ENCODE measurements at regions of chr3 and their contacts with region 1.

Region 1: DNA sequence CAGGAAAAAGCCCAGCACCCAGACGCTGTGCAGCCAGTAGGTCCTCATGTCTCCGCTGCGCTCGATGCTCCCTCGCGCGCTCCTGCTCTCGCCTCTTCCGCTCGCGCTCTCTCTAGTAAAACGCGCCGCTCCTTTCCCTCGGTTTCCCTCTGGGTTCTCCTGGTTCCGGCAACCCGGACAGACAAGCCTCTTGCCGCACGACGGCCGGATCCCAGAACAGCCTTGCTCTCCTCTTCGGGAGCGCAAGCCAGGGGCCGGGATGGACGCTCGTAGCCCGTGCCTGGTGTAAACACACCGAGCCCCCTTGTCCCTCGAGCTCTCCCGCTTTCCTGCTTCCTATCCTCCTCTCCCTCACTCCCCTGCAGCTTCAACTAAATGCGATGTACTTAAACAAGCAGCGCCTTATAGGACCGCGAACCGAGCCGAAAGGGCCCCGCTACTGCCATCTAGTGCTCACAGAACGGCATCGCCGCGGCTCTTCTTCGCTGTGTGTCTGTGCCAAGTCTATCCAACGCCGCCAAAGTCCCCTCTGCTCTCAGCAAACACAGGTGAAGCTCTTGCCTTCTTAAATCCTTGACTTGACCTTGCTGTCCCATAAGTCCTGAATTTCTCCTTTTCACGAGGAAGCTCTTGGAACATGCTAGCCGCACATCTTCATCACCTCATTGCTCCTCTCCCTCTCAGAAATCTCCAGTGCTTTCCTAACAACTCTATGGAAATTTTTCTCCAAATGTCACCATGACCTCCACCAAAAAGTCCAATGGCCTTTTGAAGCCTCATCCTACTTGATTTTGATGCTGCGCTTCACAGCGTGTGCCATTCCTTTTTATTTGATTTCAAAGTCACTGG is 1037.2 kb downstream of the IGSF11 start:
- DNase-seq: peak; percentile 31 to 83
- ATAC-seq: peak; percentile 90 to 98
- H3K4me3 ChIP-seq: peak overlapping the region; percentile 56
- H3K27ac ChIP-seq: peak overlapping the region; percentile 54 to 80
- H3K4me1 ChIP-seq: peaks cover 8% of the 10 kb centered on the region; the same call in 2 of the 3 replicates
- CTCF ChIP-seq: peak; percentile 81
- EP300 ChIP-seq: no peak
- POLR2A ChIP-seq: no peak
- RAD21 ChIP-seq: peak; percentile 85 to 91

Region 2: DNA sequence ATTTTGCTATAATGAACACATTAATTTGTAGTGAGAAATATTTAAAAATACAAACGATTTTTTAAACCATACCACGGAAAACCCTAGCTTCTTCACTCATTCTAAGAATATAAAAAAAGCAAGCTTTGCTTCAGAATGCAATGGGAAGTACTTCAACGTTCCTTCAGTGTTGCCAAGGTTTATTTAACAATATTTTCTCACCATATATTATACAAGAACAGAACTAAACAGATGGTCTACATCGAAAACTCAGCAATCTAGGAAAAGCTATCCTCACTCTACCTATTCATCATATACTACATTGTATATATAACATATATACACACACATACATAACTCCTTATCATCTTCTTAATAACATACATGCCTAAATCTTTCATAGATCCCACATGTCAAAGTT is 10.2 kb before region 1 on chr3:
- CTCF ChIA-PET with region 1: interaction called, 21 read pairs
- POLR2A ChIA-PET with region 1: no interaction called
- DNase-seq: no peak
- ATAC-seq: no peak
- H3K4me3 ChIP-seq: no peak overlapping the region
- H3K27ac ChIP-seq: no peak overlapping the region
- H3K4me1 ChIP-seq: no peaks in the 10 kb centered on the region
- CTCF ChIP-seq: no peak
- EP300 ChIP-seq: no peak
- POLR2A ChIP-seq: no peak
- RAD21 ChIP-seq: no peak

Region 3: GRCh38 chr3:118011910-118012309 is 14.5 kb after region 1 on chr3:
- CTCF ChIA-PET with region 1: interaction called, 10 read pairs
- POLR2A ChIA-PET with region 1: no interaction called
- DNase-seq: no peak
- ATAC-seq: no peak
- H3K4me3 ChIP-seq: no peak overlapping the region
- H3K27ac ChIP-seq: no peak overlapping the region
- H3K4me1 ChIP-seq: no peaks in the 10 kb centered on the region
- CTCF ChIP-seq: no peak
- EP300 ChIP-seq: no peak
- POLR2A ChIP-seq: no peak
- RAD21 ChIP-seq: no peak

Region 4: DNA sequence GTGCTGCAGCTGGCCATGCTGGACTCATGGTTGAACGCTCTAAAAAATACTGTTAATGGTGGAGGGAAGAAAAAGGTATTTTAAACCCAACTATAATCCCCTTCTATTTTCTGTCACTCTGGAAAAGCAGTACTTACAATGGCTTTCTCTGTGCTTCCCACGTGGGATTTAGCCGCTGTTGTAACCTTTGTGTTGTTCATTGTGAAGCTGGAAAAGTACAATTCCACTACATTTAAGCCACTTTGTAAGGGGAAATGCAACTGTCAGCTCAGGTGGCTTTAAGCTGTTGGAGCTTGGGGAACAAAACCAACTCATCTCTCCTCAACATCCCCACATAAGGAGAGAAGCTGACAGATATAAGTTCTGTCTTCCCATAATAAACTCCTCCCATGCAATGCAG is 119.6 kb after region 1 on chr3:
- CTCF ChIA-PET with region 1: no interaction called
- POLR2A ChIA-PET with region 1: no interaction called
- DNase-seq: no peak
- ATAC-seq: no peak
- H3K4me3 ChIP-seq: no peak overlapping the region
- H3K27ac ChIP-seq: no peak overlapping the region
- H3K4me1 ChIP-seq: no peaks in the 10 kb centered on the region
- CTCF ChIP-seq: no peak
- EP300 ChIP-seq: no peak
- POLR2A ChIP-seq: no peak
- RAD21 ChIP-seq: no peak